ENCODE measurements at regions of chrX and their contacts with region 1.

Region 1: GRCh38 chrX:1323315-1323714 is 13.3 kb upstream of the IL3RA start:
- H3K4me3 Mint-ChIP-seq: peak overlapping the region; percentile 30
- H3K27ac Mint-ChIP-seq: peak overlapping the region; percentile 99
- H3K4me1 Mint-ChIP-seq: peaks cover 58% of the 10 kb centered on the region
- H3K27me3 Mint-ChIP-seq: peaks cover 2% of the 10 kb centered on the region

Region 2: DNA sequence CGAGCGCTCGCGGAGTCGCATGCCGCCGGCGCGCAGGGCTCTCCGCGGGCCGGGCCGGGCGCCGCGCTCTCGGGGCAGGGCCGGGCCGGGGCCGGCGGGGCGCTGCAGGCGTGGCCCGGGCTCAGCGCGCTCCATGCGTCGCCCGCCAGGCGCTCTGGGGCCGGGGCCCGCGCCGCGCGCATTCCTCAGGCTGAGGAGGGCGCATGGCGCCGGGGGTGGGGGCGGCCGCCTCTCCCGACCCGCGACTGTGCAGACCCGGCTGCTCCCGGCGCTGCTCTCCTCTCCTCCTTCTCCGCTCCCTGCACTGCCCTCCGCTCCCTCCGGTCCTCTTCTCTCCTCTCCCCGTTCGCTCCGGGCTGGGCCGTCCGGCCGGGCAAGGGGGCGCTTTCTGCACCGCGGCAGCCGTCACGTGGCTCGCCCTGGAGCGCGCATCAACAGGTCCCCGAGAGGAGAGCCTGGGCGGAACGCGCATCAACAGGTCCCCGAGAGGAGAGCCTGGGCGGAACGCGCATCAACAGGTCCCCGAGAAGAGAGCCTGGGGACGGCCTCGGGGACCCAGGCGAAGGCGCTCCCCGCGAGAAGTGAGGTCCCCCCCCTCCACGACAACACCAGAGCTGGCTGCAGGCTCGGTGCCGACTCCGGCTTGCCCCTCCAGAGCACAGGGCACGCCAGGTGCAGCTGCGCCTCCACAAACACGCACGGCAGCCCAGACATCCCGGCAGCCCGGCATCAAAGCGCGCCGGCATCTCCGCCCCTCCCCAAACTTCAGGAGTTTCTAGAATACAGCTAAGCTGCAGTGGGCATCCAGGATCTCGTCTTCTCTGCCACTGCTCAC is 949.5 kb before region 1 on chrX:
- intact Hi-C with region 1: no loop called
- H3K4me3 Mint-ChIP-seq: no peak overlapping the region
- H3K27ac Mint-ChIP-seq: no peak overlapping the region
- H3K4me1 Mint-ChIP-seq: peaks cover 14% of the 10 kb centered on the region
- H3K27me3 Mint-ChIP-seq: peaks cover 46% of the 10 kb centered on the region

Region 3: DNA sequence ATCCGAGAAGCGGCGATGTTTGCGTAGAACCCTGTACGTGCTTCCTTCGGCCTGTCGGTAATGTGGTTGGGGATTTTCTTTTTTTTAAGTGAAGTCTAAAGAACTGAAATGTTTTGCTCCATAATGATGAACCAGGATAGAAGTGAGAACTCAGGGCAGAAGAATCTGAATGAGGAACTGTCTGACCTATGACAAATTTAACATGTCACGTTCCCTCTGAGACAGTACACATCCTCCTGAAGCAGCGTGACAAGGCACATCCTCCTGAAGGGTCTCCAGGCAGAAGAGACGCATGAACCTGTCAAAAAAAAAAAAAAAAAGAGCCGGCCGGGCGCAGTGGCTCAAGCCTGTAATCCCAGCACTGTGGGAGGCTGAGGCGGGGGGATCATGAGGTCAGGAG is 48.5 kb before region 1 on chrX:
- intact Hi-C with region 1: loop called (anchors 1 kb)
- H3K4me3 Mint-ChIP-seq: peak overlapping the region; percentile 74
- H3K27ac Mint-ChIP-seq: peak overlapping the region; percentile 90
- H3K4me1 Mint-ChIP-seq: peaks cover 71% of the 10 kb centered on the region
- H3K27me3 Mint-ChIP-seq: no peaks in the 10 kb centered on the region

Region 4: GRCh38 chrX:1336331-1336943 is 13.1 kb after region 1 on chrX and contains the start of gene IL3RA:
- intact Hi-C with region 1: loop called (anchors 1 kb)
- H3K4me3 Mint-ChIP-seq: peak within 1 kb of the TSS; percentile 96
- H3K27ac Mint-ChIP-seq: peak within 1 kb of the TSS; percentile 96
- H3K4me1 Mint-ChIP-seq: peaks cover 68% of the 10 kb centered on the region
- H3K27me3 Mint-ChIP-seq: no peaks in the 10 kb centered on the region